ENCODE measurements at regions of chr1 and their contacts with region 1.

Region 1: DNA sequence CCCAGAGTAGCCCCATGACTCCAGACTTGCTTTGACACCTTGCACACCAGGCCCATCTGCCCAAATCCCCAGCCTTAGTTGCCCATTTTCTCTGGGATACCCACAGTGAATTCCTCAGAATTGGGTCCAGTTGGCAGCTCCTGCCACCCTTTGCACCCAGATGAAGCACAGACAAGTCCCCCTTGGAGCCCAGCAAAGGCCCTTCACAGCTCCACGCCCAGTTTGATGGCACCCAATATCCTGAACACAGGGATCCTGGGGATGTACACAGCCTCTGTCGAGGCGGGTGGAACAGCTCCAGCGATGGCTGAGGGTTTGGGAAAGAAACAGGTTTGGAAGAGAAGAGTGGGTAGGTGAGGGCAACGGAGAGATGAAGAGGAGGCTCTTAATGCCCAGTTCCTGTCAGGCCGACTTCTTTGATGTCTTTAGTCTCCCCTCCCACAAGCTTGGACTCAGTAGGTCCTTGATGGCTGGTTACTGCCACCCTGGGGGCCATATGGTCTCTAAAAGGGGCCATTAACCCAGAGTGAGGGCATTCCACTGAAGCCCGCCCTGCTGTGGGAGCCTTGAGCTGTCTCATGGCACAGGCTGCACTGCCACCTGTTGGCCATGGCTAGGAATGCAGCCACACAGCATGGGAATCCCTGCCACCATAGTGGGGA is 21.7 kb downstream of the TMEM53 start:
- DNase-seq: peak; percentile 86

Region 2: DNA sequence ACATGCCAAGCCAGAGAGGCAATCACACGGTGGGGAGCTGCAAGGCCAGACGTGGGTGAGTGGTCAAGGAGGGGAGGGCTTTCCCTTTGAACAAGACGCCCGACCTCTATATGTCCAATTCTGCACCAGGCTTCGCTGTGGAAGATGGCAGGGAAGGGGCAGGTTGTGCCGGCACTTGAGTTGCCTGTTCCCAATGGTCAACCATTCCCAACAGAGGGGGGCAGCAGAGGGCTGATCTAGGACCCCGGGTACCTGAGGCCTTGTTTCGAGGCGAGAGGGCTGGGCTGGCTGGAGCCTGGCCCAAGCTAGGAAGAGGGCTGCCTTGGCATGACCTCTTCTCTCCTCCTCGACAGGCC is 43.2 kb before region 1 on chr1:
- CTCF ChIA-PET with region 1: interaction called, 26 read pairs
- POLR2A ChIA-PET with region 1: interaction called, 20 read pairs
- DNase-seq: peak; percentile 56

Region 3: DNA sequence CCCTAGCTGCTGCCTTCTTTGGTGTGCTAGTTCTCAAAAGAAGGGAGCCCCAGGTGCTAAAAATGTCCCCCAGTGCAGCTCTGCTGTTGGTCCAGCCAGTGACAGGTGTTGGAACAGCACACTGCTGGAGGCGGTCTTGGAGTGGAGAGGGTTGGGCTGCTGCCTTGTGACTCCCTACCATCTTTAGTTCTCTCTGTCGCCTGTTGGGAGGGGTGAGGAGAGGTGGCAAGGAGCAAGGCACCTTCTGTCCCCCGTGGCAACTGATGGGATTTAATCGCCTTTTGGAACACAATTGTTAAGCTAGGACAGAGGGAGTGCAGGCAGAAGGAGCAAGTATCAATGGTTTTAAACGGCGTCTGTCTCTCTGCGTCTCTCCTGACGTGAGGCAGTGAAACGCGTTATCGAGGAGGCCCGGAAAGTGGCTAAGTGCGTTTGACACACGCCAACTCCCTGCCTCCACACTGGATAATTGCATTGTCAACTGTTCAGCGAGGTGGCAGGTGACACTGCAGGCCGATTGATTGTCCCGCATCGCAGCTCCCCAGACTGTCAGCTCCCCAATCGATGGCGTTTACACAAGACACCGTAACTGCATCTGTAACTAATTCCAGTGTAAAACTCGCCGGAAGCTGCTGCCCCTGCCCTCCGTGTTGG is 12.2 kb before region 1 on chr1:
- CTCF ChIA-PET with region 1: interaction called, 19 read pairs
- POLR2A ChIA-PET with region 1: interaction called, 8 read pairs
- DNase-seq: no peak